GM13976 (cell line): ENCODE measurements at regions of chr14 and their contacts with region 1.

Region 1: GRCh38 chr14:74852927-74853514 is 22.9 kb downstream of the PROX2 start:
- DNase-seq: no peak
- CTCF ChIP-seq: no peak

Region 2: GRCh38 chr14:75090353-75090752 is 237.3 kb after region 1 on chr14:
- in situ Hi-C with region 1: loop called (anchors 10 kb)
- DNase-seq: no peak
- CTCF ChIP-seq: no peak